ENCODE measurements at regions of chr12 and their contacts with region 1.

Region 1: GRCh38 chr12:109775172-109775881 is 57.9 kb downstream of the TRPV4 start:
- DNase-seq: peak; percentile 43
- H3K4me3 Mint-ChIP-seq: no peak overlapping the region
- H3K27ac Mint-ChIP-seq: no peak overlapping the region
- H3K4me1 Mint-ChIP-seq: peaks cover 4% of the 10 kb centered on the region
- H3K27me3 Mint-ChIP-seq: no peaks in the 10 kb centered on the region

Region 2: GRCh38 chr12:109428037-109428629 is 347.2 kb before region 1 on chr12:
- intact Hi-C with region 1: loop called (anchors 1 kb)
- DNase-seq: peak; percentile 61
- H3K4me3 Mint-ChIP-seq: no peak overlapping the region
- H3K27ac Mint-ChIP-seq: no peak overlapping the region
- H3K4me1 Mint-ChIP-seq: peaks cover 3% of the 10 kb centered on the region
- H3K27me3 Mint-ChIP-seq: no peaks in the 10 kb centered on the region

Region 3: GRCh38 chr12:109449845-109450532 is 325.3 kb before region 1 on chr12:
- intact Hi-C with region 1: no loop called
- DNase-seq: no peak
- H3K4me3 Mint-ChIP-seq: no peak overlapping the region
- H3K27ac Mint-ChIP-seq: no peak overlapping the region
- H3K4me1 Mint-ChIP-seq: no peaks in the 10 kb centered on the region
- H3K27me3 Mint-ChIP-seq: no peaks in the 10 kb centered on the region

Region 4: GRCh38 chr12:109518820-109519665 is 256.3 kb before region 1 on chr12:
- intact Hi-C with region 1: loop called (anchors 1 kb)
- DNase-seq: peak; percentile 22
- H3K4me3 Mint-ChIP-seq: no peak overlapping the region
- H3K27ac Mint-ChIP-seq: no peak overlapping the region
- H3K4me1 Mint-ChIP-seq: no peaks in the 10 kb centered on the region
- H3K27me3 Mint-ChIP-seq: no peaks in the 10 kb centered on the region

Region 5: GRCh38 chr12:109597795-109598427 is 177.4 kb before region 1 on chr12:
- intact Hi-C with region 1: loop called (anchors 1 kb)
- DNase-seq: peak; percentile 44
- H3K4me3 Mint-ChIP-seq: no peak overlapping the region
- H3K27ac Mint-ChIP-seq: no peak overlapping the region
- H3K4me1 Mint-ChIP-seq: peaks cover 20% of the 10 kb centered on the region
- H3K27me3 Mint-ChIP-seq: no peaks in the 10 kb centered on the region